Natural killer cell (primary cell): ENCODE measurements at regions of chr3 and their contacts with region 1.

Region 1: DNA sequence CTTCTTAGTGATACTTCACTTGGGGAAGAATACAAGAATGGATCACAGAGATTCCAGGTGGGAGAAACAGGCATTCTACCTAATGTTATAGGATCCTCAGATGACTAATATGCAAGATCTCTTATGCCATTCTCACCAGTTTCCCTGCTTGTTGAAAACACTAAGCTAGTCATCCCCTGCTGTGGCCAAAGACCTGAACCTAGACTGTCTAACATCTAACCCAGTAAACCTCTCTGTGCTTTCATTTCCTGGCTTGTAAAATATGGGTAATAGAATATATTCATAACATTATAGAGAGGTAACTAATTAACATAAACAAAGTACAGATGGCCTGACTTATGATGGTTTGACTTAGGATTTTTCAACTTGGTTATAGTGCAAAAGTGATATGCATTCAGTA is 776.3 kb downstream of the TUSC7 start:
- DNase-seq: no peak
- ATAC-seq: no peak
- H3K4me3 ChIP-seq: no peak overlapping the region
- H3K4me3 Mint-ChIP-seq: no peak overlapping the region
- H3K27ac ChIP-seq: no peak overlapping the region
- H3K27ac Mint-ChIP-seq: no peak overlapping the region
- H3K4me1 ChIP-seq: no peaks in the 10 kb centered on the region
- H3K4me1 Mint-ChIP-seq: no peaks in the 10 kb centered on the region
- H3K27me3 ChIP-seq: no peaks in the 10 kb centered on the region
- H3K27me3 Mint-ChIP-seq: no peaks in the 10 kb centered on the region
- CTCF ChIP-seq: no peak

Region 2: GRCh38 chr3:117059067-117059955 is 426.5 kb before region 1 on chr3:
- intact Hi-C with region 1: no loop called
- DNase-seq: no peak
- ATAC-seq: no peak
- H3K4me3 ChIP-seq: no peak overlapping the region
- H3K4me3 Mint-ChIP-seq: no peak overlapping the region
- H3K27ac ChIP-seq: no peak overlapping the region
- H3K27ac Mint-ChIP-seq: no peak overlapping the region
- H3K4me1 ChIP-seq: no peaks in the 10 kb centered on the region
- H3K4me1 Mint-ChIP-seq: no peaks in the 10 kb centered on the region
- H3K27me3 ChIP-seq: no peaks in the 10 kb centered on the region
- H3K27me3 Mint-ChIP-seq: no peaks in the 10 kb centered on the region
- CTCF ChIP-seq: no peak

Region 3: DNA sequence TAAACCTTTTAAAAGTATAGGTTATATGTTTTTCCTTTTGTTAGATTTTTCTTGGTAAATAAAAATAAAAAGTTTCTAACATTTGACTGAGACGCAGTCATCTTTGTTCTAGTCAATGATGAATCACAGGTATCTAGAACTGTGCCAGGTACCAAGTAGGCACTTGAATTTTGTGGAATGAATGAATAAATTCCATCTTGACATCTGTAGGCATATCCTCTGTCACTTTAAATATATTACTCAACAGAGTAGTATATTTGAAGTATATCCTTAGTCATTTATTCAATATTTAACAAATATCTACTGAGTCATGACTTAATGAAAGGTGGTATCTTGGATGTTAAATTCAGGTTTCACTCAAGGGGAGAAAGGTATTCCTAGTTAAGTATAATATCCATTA is 52.1 kb after region 1 on chr3:
- intact Hi-C with region 1: no loop called
- DNase-seq: no peak
- ATAC-seq: no peak
- H3K4me3 ChIP-seq: no peak overlapping the region
- H3K4me3 Mint-ChIP-seq: no peak overlapping the region
- H3K27ac ChIP-seq: no peak overlapping the region
- H3K27ac Mint-ChIP-seq: no peak overlapping the region
- H3K4me1 ChIP-seq: no peaks in the 10 kb centered on the region
- H3K4me1 Mint-ChIP-seq: no peaks in the 10 kb centered on the region
- H3K27me3 ChIP-seq: no peaks in the 10 kb centered on the region
- H3K27me3 Mint-ChIP-seq: no peaks in the 10 kb centered on the region
- CTCF ChIP-seq: no peak

Region 4: DNA sequence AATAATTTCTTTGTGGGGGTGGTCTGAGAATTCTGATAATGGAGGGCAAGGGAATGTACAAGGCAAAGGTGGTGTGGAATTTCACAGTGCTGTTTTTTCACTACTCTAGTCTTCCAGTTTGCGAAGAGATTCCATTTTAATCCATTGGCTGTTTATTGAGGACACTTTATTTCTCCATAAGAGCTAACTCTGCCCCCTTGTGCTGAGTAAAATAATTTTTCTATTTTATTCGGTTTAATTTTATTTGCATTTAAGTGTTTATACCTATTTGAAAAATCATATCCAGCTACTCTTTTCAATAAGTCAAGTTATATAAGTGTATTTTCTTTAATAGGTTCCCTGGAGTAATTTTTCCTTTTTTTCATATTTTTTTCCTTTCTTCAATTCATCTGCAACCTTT is 63.9 kb after region 1 on chr3:
- intact Hi-C with region 1: loop called (anchors 2 kb)
- DNase-seq: no peak
- ATAC-seq: no peak
- H3K4me3 ChIP-seq: no peak overlapping the region
- H3K4me3 Mint-ChIP-seq: no peak overlapping the region
- H3K27ac ChIP-seq: no peak overlapping the region
- H3K27ac Mint-ChIP-seq: no peak overlapping the region
- H3K4me1 ChIP-seq: no peaks in the 10 kb centered on the region
- H3K4me1 Mint-ChIP-seq: no peaks in the 10 kb centered on the region
- H3K27me3 ChIP-seq: no peaks in the 10 kb centered on the region
- H3K27me3 Mint-ChIP-seq: no peaks in the 10 kb centered on the region
- CTCF ChIP-seq: no peak